Activated CD4-positive, alpha-beta memory T cell treated with anti-CD3 and anti-CD28 coated beads, Interleukin-2, amount 10 ng/mL, durations not matched to agents 7 days and 5 days (primary cell): ENCODE measurements at regions of chr1 and their contacts with region 1.

Region 1: DNA sequence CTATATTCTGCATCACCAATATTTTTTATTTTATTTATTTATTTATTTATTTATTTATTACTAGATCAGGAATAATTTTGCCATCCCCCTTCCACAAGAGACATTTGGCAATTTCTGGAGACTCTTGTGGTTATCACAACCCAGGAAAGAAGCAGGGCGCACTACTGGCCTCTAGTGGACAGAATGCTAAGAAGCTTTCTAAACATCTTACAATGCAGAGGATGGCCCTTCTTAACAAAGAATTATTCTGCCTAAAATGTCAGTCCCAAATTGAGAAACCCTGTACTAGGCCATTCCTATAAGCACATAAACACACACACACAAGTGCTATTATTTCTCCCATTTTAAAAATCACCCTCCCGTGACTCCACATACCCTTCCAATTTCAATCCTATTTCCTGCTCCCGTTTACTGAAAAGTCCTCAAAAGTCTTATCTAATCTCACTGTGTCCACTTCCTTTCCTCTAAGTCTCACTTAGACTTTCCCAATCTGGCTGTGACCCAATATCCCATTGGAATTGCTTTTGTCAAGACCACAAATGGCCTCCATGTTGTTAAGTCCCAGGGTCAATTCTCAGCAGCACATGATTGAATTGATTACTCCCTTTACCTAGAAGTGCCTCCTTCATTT is 43.7 kb upstream of the RNF11 start:
- DNase-seq: peak; percentile 56
- H3K4me3 Mint-ChIP-seq: no peak overlapping the region
- H3K27ac Mint-ChIP-seq: no peak overlapping the region
- H3K4me1 Mint-ChIP-seq: no peaks in the 10 kb centered on the region
- H3K27me3 Mint-ChIP-seq: peaks cover 6% of the 10 kb centered on the region

Region 2: GRCh38 chr1:50774759-50775351 is 417.5 kb before region 1 on chr1:
- CTCF ChIA-PET with region 1: interaction called, 70 read pairs
- POLR2A ChIA-PET with region 1: no interaction called
- DNase-seq: no peak
- H3K4me3 Mint-ChIP-seq: no peak overlapping the region
- H3K27ac Mint-ChIP-seq: no peak overlapping the region
- H3K4me1 Mint-ChIP-seq: no peaks in the 10 kb centered on the region
- H3K27me3 Mint-ChIP-seq: no peaks in the 10 kb centered on the region

Region 3: DNA sequence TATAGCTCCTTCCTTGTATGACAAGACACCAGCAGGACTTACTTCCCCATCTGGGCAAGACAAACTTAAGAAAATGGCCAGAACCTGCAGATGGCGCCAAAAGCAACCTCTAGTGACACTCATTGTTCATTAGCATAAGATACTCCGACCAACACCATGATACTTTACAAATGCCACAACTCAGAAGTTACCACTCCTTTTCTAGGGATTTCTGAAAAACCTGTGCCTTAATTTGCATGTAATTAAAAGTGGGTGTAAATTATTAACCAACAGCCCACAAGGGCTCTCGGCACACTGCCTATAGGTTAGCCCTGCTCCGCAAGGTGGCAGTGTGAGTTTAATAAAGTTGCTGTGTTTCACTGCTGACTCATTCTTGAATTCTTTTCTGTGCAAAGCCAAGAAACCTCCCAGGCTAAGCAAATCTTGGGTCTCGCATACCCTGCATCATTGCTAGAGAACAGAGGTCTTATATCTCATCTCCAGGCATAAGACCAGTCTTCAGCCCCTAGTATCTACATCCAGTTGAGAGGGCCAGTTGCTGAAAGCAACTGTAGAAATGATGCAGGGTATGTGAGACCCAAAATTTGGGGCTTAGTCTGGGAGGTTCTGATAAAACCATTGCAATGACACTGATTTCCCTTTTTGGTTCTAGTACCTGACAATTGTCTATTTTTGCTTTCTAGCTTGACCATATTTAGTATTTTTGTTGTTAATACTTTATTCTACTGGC is 318.7 kb before region 1 on chr1:
- CTCF ChIA-PET with region 1: interaction called, 11 read pairs
- POLR2A ChIA-PET with region 1: no interaction called
- DNase-seq: peak; percentile 79
- H3K4me3 Mint-ChIP-seq: peak overlapping the region; percentile 55
- H3K27ac Mint-ChIP-seq: no peak overlapping the region
- H3K4me1 Mint-ChIP-seq: peaks cover 6% of the 10 kb centered on the region
- H3K27me3 Mint-ChIP-seq: no peaks in the 10 kb centered on the region

Region 4: DNA sequence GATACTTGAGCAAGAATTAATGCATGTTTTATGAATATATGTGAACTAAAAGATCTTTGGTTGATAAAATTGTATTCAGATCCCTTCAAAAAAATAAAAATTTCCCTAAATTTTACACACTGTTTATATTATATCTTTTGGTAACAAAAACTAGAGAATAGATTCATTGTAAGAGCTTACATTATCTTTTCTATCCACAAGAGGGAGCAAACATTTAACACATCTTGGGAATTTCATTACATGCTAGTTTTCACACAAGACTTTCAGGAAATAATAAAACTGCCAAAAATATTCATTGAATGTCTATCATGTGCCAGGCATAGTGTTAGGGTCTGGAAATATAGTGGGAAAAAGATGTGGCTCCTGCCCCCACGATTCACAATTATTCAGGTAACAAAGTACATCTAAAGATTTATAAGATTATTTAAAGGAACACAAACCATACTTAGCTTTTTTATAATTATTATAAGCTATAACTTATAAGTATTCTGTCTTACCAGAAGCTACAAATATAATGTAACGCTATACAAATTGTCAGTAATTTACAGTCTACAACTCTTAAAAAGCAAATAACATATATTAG is 262.9 kb before region 1 on chr1:
- CTCF ChIA-PET with region 1: interaction called, 41 read pairs
- POLR2A ChIA-PET with region 1: no interaction called
- DNase-seq: no peak
- H3K4me3 Mint-ChIP-seq: no peak overlapping the region
- H3K27ac Mint-ChIP-seq: no peak overlapping the region
- H3K4me1 Mint-ChIP-seq: peaks cover 16% of the 10 kb centered on the region
- H3K27me3 Mint-ChIP-seq: no peaks in the 10 kb centered on the region

Region 5: GRCh38 chr1:51000160-51000559 is 192.2 kb before region 1 on chr1:
- CTCF ChIA-PET with region 1: no interaction called
- POLR2A ChIA-PET with region 1: no interaction called
- DNase-seq: no peak
- H3K4me3 Mint-ChIP-seq: no peak overlapping the region
- H3K27ac Mint-ChIP-seq: no peak overlapping the region
- H3K4me1 Mint-ChIP-seq: no peaks in the 10 kb centered on the region
- H3K27me3 Mint-ChIP-seq: peaks cover 18% of the 10 kb centered on the region

Region 6: DNA sequence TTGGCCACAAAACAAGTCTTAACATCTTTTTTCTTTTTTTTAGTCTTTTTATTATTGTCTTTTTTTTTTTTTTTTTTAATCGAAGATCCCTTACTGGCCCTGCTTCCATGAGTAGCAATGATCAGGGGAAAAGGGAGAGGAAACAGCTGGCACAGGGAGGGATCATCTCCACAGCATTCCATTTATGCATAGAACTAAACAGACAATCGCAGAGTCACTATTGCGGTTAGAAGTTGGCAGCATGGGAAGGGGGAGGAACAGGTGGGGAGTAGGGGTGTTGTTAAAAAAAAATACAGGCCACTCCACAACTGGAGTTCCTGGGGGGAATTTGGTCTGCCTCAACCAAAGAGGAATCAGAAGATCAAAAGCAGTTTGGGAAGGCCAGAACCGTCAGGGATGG is 34.9 kb before region 1 on chr1:
- CTCF ChIA-PET with region 1: no interaction called
- POLR2A ChIA-PET with region 1: no interaction called
- DNase-seq: no peak
- H3K4me3 Mint-ChIP-seq: no peak overlapping the region
- H3K27ac Mint-ChIP-seq: no peak overlapping the region
- H3K4me1 Mint-ChIP-seq: no peaks in the 10 kb centered on the region
- H3K27me3 Mint-ChIP-seq: peaks cover 27% of the 10 kb centered on the region

Region 7: GRCh38 chr1:51175278-51175677 is 17.1 kb before region 1 on chr1:
- CTCF ChIA-PET with region 1: interaction called, 12 read pairs
- POLR2A ChIA-PET with region 1: no interaction called
- DNase-seq: no peak
- H3K4me3 Mint-ChIP-seq: no peak overlapping the region
- H3K27ac Mint-ChIP-seq: no peak overlapping the region
- H3K4me1 Mint-ChIP-seq: no peaks in the 10 kb centered on the region
- H3K27me3 Mint-ChIP-seq: peaks cover 33% of the 10 kb centered on the region

Region 8: DNA sequence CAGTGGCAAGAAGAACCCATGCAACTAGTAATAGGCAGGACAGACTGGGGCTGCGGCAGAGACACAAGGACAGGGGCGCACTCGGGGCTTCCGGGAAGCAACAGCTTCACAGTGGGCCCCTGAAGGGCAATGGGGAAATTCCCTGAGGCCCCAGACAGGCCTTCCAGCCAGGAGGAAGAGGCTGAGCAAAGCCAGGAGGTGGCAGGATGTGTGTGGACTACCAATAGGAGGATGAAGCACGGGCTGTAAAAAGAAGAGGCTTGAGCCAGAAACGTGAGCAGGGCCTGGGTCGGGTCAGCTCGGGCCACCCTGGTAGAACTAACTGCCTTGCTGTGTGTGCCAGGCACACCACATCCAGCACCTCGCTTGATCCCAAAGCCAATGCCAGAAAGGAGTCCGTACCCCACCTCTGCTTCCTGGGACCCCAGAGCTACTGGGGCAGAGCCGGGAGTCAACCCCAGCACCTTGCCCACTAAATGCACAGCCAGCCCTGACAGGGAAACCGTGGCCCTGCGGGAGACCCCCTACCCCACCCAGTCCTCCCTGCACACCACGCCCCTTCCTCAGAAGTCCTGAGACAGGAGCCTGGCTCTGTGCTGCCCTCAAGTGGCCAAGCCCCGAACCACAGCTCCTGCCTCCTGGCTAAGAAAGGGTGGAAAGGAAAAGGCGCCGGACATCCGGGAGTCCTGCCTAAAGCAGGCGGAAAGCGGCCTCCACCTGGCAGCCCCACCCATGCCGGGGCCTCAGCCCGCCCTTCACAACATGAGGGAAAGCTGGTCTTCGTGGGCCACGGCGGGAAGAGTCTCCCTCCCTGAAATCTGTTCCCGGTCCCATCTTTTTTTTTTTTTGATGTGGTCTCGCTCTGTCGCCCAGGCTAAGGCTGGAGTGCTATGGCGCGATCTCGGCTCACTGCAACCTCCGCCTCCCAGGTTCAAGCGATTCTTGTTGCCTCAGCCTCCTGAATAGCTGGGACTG is 104.3 kb after region 1 on chr1:
- CTCF ChIA-PET with region 1: interaction called, 60 read pairs
- POLR2A ChIA-PET with region 1: no interaction called
- DNase-seq: peak; percentile 79
- H3K4me3 Mint-ChIP-seq: peak overlapping the region; percentile 58
- H3K27ac Mint-ChIP-seq: no peak overlapping the region
- H3K4me1 Mint-ChIP-seq: peaks cover 44% of the 10 kb centered on the region
- H3K27me3 Mint-ChIP-seq: no peaks in the 10 kb centered on the region

Region 9: DNA sequence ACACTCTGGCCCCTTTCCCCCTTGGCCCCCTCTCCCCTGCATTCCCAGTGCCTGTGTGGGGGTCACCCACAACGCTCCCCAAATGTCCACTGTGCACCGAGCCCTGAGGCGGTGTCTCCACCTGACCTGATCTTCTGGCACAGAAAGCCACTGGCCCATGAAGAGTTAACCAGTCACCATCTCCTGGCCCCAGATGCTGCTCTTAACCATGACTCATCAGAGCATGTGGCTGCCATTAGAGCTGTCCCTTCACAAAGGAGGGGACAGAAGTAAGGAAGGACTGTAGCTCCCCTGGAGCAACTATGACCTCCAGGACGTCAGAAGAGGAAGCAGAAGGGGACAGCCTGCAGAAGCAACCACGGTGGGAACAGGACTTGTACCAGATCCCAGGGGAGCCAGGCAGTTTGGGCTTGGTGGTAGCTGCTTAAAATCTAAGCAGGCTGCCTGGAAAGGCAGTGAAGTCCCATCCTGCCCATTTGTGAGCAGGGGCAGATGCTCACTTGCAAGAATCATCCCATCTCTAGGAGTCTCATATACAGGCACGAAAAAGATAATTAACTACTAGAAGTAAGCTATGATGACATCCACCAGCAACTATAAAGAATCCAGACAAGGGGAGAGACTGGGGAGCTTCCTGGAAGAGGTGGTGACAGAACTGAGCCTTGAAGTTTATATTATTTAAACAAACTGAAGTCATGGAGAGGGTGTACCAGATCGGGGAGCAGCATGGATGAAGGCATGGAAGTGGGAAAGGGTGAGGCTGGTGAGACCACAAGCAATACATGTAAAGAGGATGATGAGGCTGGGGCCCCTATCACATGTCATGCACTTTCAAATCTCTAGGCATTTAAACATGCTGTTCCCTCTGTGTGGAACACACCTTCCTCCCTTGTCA is 139.1 kb after region 1 on chr1:
- CTCF ChIA-PET with region 1: no interaction called
- POLR2A ChIA-PET with region 1: no interaction called
- DNase-seq: no peak
- H3K4me3 Mint-ChIP-seq: peak overlapping the region; percentile 54
- H3K27ac Mint-ChIP-seq: no peak overlapping the region
- H3K4me1 Mint-ChIP-seq: peaks cover 10% of the 10 kb centered on the region
- H3K27me3 Mint-ChIP-seq: peaks cover 35% of the 10 kb centered on the region

Region 10: GRCh38 chr1:51433269-51433971 is 241.1 kb after region 1 on chr1:
- CTCF ChIA-PET with region 1: no interaction called
- POLR2A ChIA-PET with region 1: no interaction called
- DNase-seq: no peak
- H3K4me3 Mint-ChIP-seq: no peak overlapping the region
- H3K27ac Mint-ChIP-seq: peak overlapping the region; percentile 70
- H3K4me1 Mint-ChIP-seq: peaks cover 31% of the 10 kb centered on the region
- H3K27me3 Mint-ChIP-seq: no peaks in the 10 kb centered on the region